Ovary (tissue), 10 donors: ENCODE measurements at regions of chr2 and their contacts with region 1.

Region 1: DNA sequence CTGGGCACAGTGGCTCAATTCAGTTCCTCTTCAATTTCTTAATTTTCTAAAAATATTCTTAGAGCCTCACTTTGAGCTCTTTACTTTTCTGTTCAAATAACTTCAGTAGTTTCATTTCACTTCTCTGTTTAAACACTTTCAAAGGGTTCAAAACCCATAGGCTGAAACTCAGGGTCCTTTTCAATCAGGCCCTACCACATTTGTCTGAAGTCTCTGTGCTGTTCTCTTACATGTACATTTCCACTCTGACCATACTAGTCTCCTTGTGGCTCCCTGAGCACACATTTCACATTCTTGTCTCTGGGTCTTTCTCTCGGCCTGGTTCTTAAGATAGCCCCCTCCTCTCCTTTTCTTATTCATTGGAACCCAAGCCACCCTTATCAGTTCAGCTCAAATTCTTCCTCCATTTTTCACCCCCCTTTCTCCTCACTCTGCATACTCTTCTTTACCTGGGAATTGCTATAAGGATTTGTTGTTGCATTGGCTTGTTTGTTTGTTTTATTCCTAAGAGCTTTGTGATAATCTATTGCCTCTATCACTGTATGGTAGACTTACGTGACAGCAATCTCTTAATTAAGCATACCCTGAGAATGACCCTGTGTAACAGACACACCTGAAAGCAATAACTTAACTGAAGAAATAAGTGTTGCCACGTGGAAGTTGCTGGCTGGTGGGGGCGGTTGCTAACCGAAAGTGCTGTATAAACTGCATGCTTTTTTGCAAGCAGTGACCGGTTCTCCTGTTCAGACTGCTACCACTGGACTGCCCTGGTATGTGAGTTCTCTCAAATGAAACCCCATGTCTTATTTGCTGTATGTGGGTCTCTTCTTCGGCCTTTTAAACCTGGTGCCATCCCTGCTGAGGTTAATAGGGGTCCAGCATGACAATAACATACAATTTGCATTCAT is 27.7 kb upstream of the ACADL start:
- DNase-seq: no peak
- H3K4me3 ChIP-seq: no peak overlapping the region
- H3K27ac ChIP-seq: no peak overlapping the region
- H3K4me1 ChIP-seq: no peaks in the 10 kb centered on the region
- H3K27me3 ChIP-seq: no peaks in the 10 kb centered on the region
- CTCF ChIP-seq: no peak
- EP300 ChIP-seq: no peak
- POLR2A ChIP-seq: no peak

Region 2: GRCh38 chr2:210399440-210400041 is 146.6 kb after region 1 on chr2:
- intact Hi-C with region 1: loop called in 1 of 4 experiments (anchors 10 kb)
- DNase-seq: no peak
- H3K4me3 ChIP-seq: no peak overlapping the region
- H3K27ac ChIP-seq: no peak overlapping the region
- H3K4me1 ChIP-seq: no peaks in the 10 kb centered on the region
- H3K27me3 ChIP-seq: no peaks in the 10 kb centered on the region
- CTCF ChIP-seq: no peak
- EP300 ChIP-seq: no peak
- POLR2A ChIP-seq: no peak

Region 3: DNA sequence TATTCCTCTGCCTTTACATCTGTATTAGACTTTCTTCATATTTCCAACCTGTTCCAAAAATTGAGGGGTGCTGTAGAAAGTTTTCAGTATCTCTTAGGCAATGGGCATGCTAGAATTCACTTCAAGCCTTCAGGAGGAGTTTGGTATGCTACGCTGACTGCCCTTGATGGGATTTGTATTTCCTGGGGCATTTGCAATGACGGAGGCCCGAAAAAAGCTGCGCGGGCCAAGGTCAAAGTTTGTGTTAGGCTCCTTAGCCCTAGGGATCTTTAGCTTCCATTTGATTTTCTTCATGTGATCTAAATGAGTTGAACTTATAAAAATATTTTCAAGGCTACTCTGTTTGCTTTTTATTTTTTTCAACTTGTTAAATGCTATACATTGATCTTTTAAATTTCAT is 308.5 kb after region 1 on chr2:
- intact Hi-C with region 1: no loop called
- DNase-seq: no peak
- H3K4me3 ChIP-seq: no peak overlapping the region
- H3K27ac ChIP-seq: no peak overlapping the region
- H3K4me1 ChIP-seq: no peaks in the 10 kb centered on the region
- H3K27me3 ChIP-seq: no peaks in the 10 kb centered on the region
- CTCF ChIP-seq: no peak
- EP300 ChIP-seq: no peak
- POLR2A ChIP-seq: no peak